BJ (cell line): ENCODE measurements at regions of chr1 and their contacts with region 1.

Region 1: DNA sequence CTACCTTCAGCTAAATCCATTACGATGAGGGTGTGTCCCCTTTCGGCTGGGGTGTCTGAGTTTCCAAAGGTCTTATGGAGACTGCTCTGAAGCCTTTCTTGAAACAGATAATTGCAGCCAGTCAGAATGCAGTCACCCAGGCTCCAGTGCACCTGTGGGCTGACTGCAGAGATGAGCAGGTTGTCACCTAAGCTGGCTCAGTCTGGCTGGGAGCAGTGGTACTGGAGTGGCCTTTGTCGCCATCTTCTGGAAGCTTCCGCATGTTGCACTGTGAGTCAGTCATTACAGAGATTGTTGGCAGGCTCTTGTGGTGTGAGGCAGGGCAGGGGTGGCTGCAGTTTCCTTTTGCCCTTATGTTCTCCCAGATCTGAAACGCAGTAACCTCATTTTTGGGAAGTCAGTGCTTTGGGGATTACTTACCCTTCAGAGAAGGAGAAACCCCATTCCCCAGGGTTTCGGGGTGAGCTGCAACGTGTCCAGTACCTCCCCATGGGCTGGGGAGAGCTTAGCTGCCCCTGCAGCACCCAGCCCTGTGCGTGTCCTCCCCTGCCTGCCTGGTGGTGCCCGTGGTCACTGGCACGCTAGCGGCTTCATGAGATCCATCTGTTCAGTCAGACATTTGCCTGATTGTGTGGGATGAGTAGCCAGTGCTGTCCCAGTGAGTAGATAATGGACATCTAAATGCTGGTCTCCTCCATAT is 48.0 kb downstream of the SMYD2 start:
- DNase-seq: no peak
- H3K4me3 ChIP-seq: no peak overlapping the region
- H3K27me3 ChIP-seq: no peaks in the 10 kb centered on the region
- CTCF ChIP-seq: peak; percentile 87

Region 2: GRCh38 chr1:214213136-214213535 is 115.8 kb before region 1 on chr1:
- CTCF ChIA-PET with region 1: interaction called, 263 read pairs
- POLR2A ChIA-PET with region 1: interaction called, 3 read pairs
- DNase-seq: no peak
- H3K4me3 ChIP-seq: no peak overlapping the region
- H3K27me3 ChIP-seq: peaks cover 6% of the 10 kb centered on the region
- CTCF ChIP-seq: no peak

Region 3: DNA sequence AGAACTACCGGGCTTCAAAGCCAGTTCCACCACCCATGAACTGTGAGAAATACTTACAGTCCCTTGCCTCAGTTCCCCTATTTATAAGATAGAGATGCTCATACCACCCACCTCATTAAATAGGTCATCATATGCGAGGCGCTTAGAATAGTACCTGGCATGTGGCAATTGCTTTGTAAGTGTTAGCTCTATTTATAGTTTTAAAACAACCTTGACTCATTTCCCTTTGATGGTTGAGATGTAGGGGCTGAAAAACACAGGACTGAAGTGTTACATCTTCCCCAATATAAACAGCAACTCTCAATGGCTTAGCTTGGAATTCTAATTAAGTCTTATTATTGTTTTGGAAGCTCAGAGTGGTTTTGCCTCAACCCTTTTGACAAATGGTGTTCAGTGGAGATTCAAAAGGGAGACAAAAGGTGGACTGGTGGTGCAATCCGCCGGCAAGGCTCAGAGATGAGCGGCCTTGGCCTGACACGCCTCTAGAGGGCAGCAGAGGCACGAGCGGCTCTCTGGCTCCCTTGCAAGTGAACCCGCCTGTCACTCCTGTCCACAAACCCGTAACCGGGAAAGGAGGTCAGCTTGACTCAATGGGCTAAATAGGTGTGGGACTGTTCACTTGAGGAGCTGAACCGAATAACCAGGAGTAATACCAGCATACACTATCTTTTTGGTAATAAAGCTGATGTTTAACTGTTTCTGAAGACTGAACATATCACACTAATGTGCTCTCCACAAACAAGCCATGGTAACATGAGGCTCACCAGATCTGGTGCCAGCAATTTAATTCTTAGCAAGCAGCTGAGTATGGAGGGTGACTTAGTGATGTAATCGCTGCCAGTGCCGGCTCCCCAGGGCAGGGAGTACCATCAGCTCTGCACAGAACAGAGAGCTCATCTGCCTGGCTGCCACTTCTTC is 67.5 kb before region 1 on chr1:
- CTCF ChIA-PET with region 1: interaction called, 285 read pairs
- POLR2A ChIA-PET with region 1: interaction called, 7 read pairs
- DNase-seq: peak; percentile 23
- H3K4me3 ChIP-seq: no peak overlapping the region
- H3K27me3 ChIP-seq: peaks cover 6% of the 10 kb centered on the region
- CTCF ChIP-seq: peak; percentile 99

Region 4: DNA sequence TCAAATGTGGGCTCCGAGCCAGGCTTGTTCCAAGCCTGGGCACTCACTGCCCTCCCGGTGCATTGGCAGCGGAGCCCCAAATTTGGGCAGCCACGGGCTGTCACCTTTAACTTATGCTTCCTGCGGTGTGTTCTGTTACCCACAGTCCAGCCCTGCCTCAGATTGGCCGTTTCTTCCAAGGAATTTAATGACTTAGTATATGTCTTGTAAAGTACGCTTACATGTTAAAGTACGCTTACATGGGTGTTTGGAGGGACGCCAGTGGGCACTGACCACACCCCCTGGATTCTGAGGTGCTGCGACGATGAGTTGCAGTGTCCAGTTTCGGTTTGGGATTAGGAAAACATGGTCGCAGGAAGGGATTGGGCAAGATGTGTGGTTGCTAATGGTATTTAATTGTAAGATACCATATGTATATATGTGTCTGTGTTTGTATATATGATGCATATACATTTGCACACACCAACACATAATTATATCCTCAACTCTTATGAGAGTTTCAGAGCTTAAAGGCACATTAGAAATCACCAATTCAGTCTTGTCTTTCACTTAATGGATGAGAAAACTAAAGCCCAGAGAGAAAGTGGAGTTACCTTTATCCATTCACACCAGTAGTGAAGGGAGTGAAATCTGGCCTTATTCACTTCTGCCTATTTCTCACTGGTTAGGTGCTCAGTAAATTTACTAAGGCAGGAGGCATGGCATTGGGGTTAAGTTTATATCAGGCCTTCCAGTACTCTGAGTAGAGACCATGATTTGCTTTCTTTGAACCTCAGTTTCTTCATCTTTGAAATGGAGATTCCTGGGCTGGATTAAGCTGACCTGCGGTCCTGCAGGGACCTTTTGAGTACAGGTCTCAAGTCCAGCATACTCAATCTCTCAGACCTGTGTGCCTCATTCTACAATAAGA is 46.9 kb before region 1 on chr1:
- CTCF ChIA-PET with region 1: interaction called, 17 read pairs
- POLR2A ChIA-PET with region 1: no interaction called
- DNase-seq: no peak
- H3K4me3 ChIP-seq: peak overlapping the region; percentile 74
- H3K27me3 ChIP-seq: no peaks in the 10 kb centered on the region
- CTCF ChIP-seq: no peak

Region 5: DNA sequence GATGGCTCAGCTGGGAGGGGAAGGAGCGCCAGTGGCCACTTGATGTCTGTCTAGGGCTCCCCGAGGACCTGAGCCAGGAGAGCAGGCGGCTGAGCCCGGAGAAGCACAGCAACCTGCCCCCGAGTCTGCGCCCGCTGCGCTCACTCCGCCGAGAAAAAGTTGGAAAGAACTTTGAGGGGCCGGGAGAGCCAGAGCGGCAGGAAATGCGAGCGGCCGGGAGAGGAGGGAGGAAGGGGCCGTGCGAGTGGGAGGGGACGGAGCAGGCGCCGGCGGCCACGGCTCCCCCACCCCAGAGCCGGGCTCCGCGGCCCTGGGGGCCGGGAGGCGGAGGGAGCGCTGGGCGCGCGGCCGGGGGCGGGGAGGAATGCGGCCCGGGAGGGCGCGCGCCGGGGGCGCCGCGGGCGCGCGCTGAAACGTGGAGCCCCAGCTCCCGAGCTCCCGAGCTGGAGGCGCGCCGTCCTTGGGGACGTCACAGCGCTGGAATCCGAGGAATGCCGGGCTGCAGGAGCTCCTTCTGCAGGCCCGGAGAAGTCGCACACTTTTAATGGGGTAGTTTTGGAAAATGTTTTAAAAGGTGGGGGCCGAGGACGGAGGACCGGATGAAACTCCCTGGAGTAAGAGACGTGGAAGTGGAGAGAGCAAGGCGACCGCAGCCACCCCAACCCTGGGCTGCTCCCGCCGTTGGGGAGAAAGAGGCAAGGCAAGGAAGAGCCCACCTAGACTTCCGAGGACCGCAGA is 222.7 kb after region 1 on chr1 and contains the start of gene PTPN14:
- CTCF ChIA-PET with region 1: interaction called, 17 read pairs
- POLR2A ChIA-PET with region 1: no interaction called
- DNase-seq: peak; percentile 77
- H3K4me3 ChIP-seq: peak within 1 kb of the TSS; percentile 93
- H3K27me3 ChIP-seq: no peaks in the 10 kb centered on the region
- CTCF ChIP-seq: peak; percentile 60
- polyA plus RNA-seq, gene PTPN14: 23.7 and 29.4 TPM in 2 replicates

Region 6: GRCh38 chr1:215526553-215527151 is 1197.7 kb after region 1 on chr1:
- CTCF ChIA-PET with region 1: interaction called, 47 read pairs
- POLR2A ChIA-PET with region 1: no interaction called
- DNase-seq: no peak
- H3K4me3 ChIP-seq: no peak overlapping the region
- H3K27me3 ChIP-seq: no peaks in the 10 kb centered on the region
- CTCF ChIP-seq: peak; percentile 39